Activated naive CD4-positive, alpha-beta T cell treated with anti-CD3 and anti-CD28 coated beads for 36 hours (primary cell): ENCODE measurements at regions of chr1 and their contacts with region 1.

Region 1: GRCh38 chr1:11645670-11646265 is 8.5 kb downstream of the FBXO2 start:
- DNase-seq: peak; percentile 91
- H3K4me3 Mint-ChIP-seq: no peak overlapping the region
- H3K27ac Mint-ChIP-seq: no peak overlapping the region
- H3K4me1 Mint-ChIP-seq: peaks cover 10% of the 10 kb centered on the region
- H3K27me3 Mint-ChIP-seq: no peaks in the 10 kb centered on the region

Region 2: DNA sequence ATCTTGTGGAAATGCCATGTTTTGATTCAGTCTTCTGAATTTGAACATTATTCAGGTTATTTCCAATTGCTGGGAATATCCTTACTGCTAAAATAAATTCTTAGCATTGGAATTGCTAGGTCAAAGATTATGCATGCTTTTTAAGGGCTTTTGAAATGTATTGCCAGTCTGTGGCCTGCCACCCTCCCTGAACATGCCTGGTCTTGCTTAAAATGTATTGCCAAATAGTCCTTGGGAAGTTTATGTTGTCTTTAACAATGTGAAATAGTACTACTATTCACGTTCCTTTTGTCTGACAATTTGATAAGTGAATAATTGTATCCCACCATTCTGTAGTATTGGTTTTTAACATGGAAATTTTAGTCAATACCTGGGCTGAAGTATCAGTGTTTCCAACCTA is 619.7 kb before region 1 on chr1:
- CTCF ChIA-PET with region 1: no interaction called
- intact Hi-C with region 1: no loop called
- DNase-seq: no peak
- H3K4me3 Mint-ChIP-seq: no peak overlapping the region
- H3K27ac Mint-ChIP-seq: peak overlapping the region; percentile 78
- H3K4me1 Mint-ChIP-seq: peaks cover 18% of the 10 kb centered on the region
- H3K27me3 Mint-ChIP-seq: no peaks in the 10 kb centered on the region

Region 3: DNA sequence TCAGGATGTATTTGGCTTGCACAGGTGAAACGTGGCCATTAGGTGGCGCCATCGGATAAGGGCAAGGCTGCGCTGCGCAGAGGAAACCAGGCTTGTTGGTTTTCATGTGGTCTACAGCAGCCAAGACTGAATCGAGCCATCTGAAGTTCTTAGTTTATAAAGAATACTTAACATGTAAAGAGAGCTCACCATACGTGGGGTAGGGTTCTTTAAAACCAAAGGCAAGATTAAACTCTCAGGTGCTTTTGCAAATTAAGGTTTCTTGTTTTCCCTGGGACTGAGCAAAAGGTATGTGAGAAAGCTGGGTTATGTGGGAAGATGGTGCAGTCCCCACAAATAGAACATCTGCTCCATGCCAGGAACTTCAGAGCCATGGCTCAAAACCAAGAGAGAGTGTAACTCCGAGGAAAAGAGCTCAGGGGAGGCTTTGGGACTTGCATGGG is 608.0 kb before region 1 on chr1:
- CTCF ChIA-PET with region 1: interaction called, 67 read pairs
- intact Hi-C with region 1: loop called (anchors 1 kb)
- DNase-seq: peak; percentile 94
- H3K4me3 Mint-ChIP-seq: no peak overlapping the region
- H3K27ac Mint-ChIP-seq: no peak overlapping the region
- H3K4me1 Mint-ChIP-seq: peaks cover 6% of the 10 kb centered on the region
- H3K27me3 Mint-ChIP-seq: no peaks in the 10 kb centered on the region

Region 4: GRCh38 chr1:11320153-11320936 is 325.4 kb before region 1 on chr1:
- CTCF ChIA-PET with region 1: interaction called, 7 read pairs
- intact Hi-C with region 1: loop called (anchors 5 kb)
- DNase-seq: peak; percentile 55
- H3K4me3 Mint-ChIP-seq: no peak overlapping the region
- H3K27ac Mint-ChIP-seq: no peak overlapping the region
- H3K4me1 Mint-ChIP-seq: peaks cover 4% of the 10 kb centered on the region
- H3K27me3 Mint-ChIP-seq: no peaks in the 10 kb centered on the region

Region 5: GRCh38 chr1:11478571-11479374 is 167.0 kb before region 1 on chr1 and contains the start of gene DISP3:
- CTCF ChIA-PET with region 1: interaction called, 3 read pairs
- intact Hi-C with region 1: loop called (anchors 2 kb)
- DNase-seq: peak; percentile 85
- H3K4me3 Mint-ChIP-seq: peak within 1 kb of the TSS; percentile 54
- H3K27ac Mint-ChIP-seq: no peak within 1 kb of the TSS
- H3K4me1 Mint-ChIP-seq: peaks cover 11% of the 10 kb centered on the region
- H3K27me3 Mint-ChIP-seq: peaks cover 25% of the 10 kb centered on the region
- total RNA-seq, gene DISP3: 0.07 to 0.17 TPM

Region 6: GRCh38 chr1:11536573-11537379 is 109.0 kb before region 1 on chr1:
- CTCF ChIA-PET with region 1: no interaction called
- intact Hi-C with region 1: no loop called
- DNase-seq: no peak
- H3K4me3 Mint-ChIP-seq: no peak overlapping the region
- H3K27ac Mint-ChIP-seq: no peak overlapping the region
- H3K4me1 Mint-ChIP-seq: no peaks in the 10 kb centered on the region
- H3K27me3 Mint-ChIP-seq: peaks cover 2% of the 10 kb centered on the region

Region 7: DNA sequence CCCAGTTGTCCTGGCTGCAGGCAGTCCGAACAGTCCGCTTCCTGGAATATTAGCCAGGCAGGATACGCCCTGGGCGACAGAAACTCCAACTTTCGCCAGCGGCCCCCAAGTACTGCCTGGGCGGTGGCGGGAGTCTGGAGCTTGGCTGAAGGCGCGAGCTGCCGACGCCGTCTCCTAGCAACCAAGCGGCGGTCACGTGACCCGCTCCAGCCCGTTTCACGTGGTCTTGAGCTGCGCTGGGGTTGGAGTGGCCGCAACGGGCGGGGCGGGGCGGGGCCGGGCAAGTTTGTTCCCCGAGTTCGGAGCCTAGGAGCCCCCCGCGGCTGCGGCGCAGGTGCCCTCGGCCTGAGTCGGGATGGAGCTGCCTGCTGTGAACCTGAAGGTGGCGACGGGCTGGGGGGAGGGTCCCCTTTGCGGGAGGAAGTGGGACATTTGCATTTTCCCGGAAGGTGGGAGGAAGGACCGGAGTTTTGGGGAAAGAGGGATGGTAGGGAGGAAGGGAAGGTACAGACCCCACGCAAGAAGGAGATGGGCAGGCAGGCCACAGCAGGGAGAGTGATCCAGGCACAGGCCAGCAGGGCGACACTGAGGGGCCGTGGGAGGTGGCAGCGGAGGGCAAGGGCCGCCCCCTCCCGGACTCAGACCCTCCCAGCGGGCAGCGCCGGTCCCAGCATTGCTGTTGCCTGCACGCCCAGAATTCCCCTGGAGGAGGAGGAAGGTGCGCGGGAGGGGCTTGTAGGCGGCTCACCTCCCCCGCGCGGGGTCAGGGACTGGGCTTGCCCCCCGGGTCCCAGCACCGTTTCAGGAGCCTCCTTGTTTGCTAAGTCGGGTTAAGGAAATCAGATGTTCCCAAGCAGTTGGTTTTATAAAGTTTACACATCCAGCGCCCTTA is 90.3 kb after region 1 on chr1 and contains the start of gene AGTRAP:
- CTCF ChIA-PET with region 1: interaction called, 13 read pairs
- intact Hi-C with region 1: no loop called
- DNase-seq: peak; percentile 92
- H3K4me3 Mint-ChIP-seq: peak within 1 kb of the TSS; percentile 96
- H3K27ac Mint-ChIP-seq: peak within 1 kb of the TSS; percentile 93
- H3K4me1 Mint-ChIP-seq: peaks cover 51% of the 10 kb centered on the region
- H3K27me3 Mint-ChIP-seq: no peaks in the 10 kb centered on the region
- total RNA-seq, gene AGTRAP: 20.3 to 21.7 TPM

Region 8: DNA sequence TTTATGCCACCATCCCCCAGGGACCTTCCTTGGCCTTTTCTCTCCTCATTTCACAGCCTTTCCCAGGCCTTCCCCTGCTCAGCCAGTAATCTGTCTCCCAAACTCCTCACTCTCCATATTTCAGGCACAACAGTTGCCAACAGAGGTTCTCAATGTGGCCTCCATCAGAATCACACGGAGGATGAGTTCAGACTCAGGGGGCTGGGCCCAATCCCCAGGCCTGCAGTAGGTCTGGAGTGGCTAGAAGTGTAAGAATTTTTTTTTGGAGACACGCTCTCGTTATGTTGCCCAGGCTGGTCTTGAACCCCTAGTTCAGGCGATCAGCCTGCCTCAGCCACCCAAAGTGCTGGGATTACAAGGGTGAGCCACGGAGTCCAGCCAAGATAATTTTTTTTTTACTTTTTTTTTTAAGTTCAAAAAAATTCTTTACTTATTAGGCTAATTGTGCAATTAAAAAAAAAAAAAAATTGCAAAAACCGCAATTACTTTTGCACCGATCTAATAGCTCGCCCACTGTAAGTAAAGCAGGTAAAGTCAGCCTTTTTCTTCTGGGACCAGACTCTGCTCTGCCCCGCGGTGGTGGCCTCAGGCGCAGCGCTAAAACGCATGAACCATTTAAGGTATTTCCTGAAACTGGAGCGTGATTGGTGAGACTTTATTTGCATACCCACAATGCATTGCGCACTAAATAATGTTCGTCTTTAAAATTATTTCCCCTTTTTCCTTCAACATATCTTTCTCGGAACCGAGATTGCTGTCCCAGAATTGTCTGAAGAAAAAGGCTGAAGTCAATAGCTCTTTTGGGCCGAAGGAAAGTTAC is 261.7 kb after region 1 on chr1:
- CTCF ChIA-PET with region 1: no interaction called
- intact Hi-C with region 1: loop called (anchors 5 kb)
- DNase-seq: peak; percentile 96
- H3K4me3 Mint-ChIP-seq: peak overlapping the region; percentile 96
- H3K27ac Mint-ChIP-seq: peak overlapping the region; percentile 97
- H3K4me1 Mint-ChIP-seq: peaks cover 35% of the 10 kb centered on the region
- H3K27me3 Mint-ChIP-seq: peaks cover 6% of the 10 kb centered on the region